ENCODE measurements at regions of chr12 and their contacts with region 1.

Region 1: GRCh38 chr12:96906849-96907670 is at the start of gene NEDD1:
- DNase-seq: peak; percentile 65 to 90 (median 81)
- ATAC-seq: peak; percentile 72
- H3K4me3 ChIP-seq: peak within 1 kb of the TSS; percentile 99
- H3K4me3 Mint-ChIP-seq: peak within 1 kb of the TSS; percentile 91
- H3K27ac ChIP-seq: peak within 1 kb of the TSS; percentile 99 to 100
- H3K27ac Mint-ChIP-seq: peak within 1 kb of the TSS; percentile 99
- H3K4me1 ChIP-seq: peaks cover 21% of the 10 kb centered on the region
- H3K4me1 Mint-ChIP-seq: peaks cover 46% of the 10 kb centered on the region
- H3K27me3 ChIP-seq: no peaks in the 10 kb centered on the region
- H3K27me3 Mint-ChIP-seq: no peaks in the 10 kb centered on the region
- CTCF ChIP-seq: no peak
- total RNA-seq, gene NEDD1: 26.7 to 27.8 TPM

Region 2: DNA sequence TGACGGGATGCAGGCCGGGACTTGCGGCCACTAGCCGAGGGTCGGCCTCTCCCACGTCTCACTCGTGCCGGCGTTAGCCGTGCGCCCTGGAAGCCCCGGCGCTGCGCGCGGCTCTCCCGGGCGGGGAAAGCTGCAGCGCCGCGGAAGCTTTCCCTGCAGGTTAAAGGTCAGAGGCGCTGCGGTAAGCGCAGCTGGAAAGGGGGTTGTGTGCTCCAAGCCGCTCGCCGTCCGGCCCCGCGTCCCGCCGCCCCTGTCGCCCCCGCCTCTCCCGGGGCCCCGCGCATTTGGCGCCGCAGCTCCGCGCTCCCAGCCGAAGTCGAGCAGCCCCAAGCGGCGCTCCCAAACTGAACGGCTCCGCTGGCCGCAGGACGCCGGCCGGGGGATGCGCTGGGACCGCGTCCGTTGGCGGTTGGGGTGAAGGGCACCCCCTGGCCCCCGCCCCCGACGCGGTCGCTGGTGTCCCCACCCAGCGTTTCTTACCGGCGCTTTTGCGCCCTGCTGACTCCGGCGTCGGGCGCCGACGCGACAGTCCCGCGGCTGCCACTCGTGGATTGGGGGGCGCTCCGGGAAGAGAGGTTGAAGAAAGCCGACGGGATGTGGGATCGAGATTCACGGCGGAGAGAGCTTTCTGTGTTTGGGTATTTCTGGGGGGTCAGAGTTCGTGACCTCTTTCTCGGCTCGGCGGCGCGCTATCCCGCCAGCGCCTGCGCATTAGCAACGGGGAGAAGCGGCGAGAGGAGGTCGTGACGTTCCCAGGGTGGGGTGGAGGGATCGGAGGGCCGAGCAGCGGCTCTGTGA is 1834.0 kb before region 1 on chr12 and contains the start of gene NR2C1:
- CTCF ChIA-PET with region 1: no interaction called
- POLR2A ChIA-PET with region 1: no interaction called
- intact Hi-C with region 1: loop called (anchors 5 to 10 kb)
- DNase-seq: peak; percentile 83 to 97 (median 91)
- ATAC-seq: peak; percentile 98
- H3K4me3 ChIP-seq: peak within 1 kb of the TSS; percentile 86 to 96
- H3K4me3 Mint-ChIP-seq: peak within 1 kb of the TSS; percentile 97
- H3K27ac ChIP-seq: peak within 1 kb of the TSS; percentile 71 to 74
- H3K27ac Mint-ChIP-seq: peak within 1 kb of the TSS; percentile 95
- H3K4me1 ChIP-seq: peaks cover 5% of the 10 kb centered on the region
- H3K4me1 Mint-ChIP-seq: peaks cover 26% of the 10 kb centered on the region
- H3K27me3 ChIP-seq: no peaks in the 10 kb centered on the region
- H3K27me3 Mint-ChIP-seq: no peaks in the 10 kb centered on the region
- CTCF ChIP-seq: no peak
- total RNA-seq, gene NR2C1: 40.7 to 49.2 TPM

Region 3: DNA sequence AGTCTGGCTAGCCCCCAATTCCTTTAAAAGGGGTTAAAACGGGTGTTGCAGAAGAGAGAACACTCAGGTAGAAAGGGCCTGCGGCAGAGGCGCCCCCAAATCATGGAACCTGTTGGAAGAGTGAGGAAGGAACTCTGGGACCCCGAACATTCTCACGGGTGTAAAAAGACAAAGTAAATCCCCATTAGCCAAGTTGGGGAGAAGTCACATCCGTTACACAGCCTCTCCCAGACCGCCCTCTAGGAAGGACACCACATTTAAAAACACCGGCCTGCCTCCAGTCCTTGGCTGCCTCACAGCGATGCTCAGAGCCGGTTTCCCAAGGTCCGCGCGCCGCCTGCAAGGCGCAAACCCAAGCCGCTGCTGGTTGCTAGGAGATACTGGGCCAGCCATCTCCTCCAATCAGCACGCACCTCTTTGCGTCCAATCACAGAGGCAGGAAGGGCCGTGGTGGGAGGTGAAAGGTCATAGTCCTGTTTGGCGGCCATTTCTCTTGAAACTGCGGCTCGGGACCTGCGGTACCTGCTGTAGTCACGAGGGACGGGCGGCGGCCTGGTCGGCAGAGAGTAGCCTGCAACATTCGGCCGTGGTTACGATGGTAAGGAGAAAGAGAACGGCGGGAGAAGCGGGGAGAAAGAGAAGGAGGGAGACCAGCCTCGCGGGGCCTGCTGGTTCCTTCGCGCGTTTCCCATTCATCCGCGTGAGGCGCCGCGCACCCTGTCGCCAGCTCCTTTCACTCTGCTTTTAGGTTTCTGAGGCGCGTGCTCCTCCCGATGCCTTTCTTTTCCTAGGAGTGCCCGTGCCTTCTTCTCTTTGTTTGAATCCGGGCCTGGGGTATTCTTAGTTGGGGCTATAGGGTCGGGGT is 1048.3 kb before region 1 on chr12 and contains the start of gene SNRPF:
- CTCF ChIA-PET with region 1: no interaction called
- POLR2A ChIA-PET with region 1: no interaction called
- intact Hi-C with region 1: loop called (anchors 1 to 10 kb)
- DNase-seq: peak; percentile 88 to 97 (median 92)
- ATAC-seq: peak; percentile 94
- H3K4me3 ChIP-seq: peak within 1 kb of the TSS; percentile 83 to 86
- H3K4me3 Mint-ChIP-seq: no peak within 1 kb of the TSS
- H3K27ac ChIP-seq: peak within 1 kb of the TSS; percentile 79 to 92
- H3K27ac Mint-ChIP-seq: no peak within 1 kb of the TSS
- H3K4me1 ChIP-seq: peaks cover 22% of the 10 kb centered on the region
- H3K4me1 Mint-ChIP-seq: peaks cover 21% of the 10 kb centered on the region
- H3K27me3 ChIP-seq: peaks cover 0 to 2% of the 10 kb centered on the region in 2 experiments
- H3K27me3 Mint-ChIP-seq: peaks cover 3% of the 10 kb centered on the region
- CTCF ChIP-seq: no peak
- total RNA-seq, gene SNRPF: 42.9 to 49.2 TPM

Region 4: GRCh38 chr12:96035278-96036236 is 871.5 kb before region 1 on chr12 and contains the start of gene LTA4H:
- CTCF ChIA-PET with region 1: no interaction called
- POLR2A ChIA-PET with region 1: no interaction called
- intact Hi-C with region 1: loop called (anchors 2 to 5 kb)
- DNase-seq: peak; percentile 90 to 99 (median 97)
- ATAC-seq: peak; percentile 92
- H3K4me3 ChIP-seq: peak within 1 kb of the TSS; percentile 65 to 92
- H3K4me3 Mint-ChIP-seq: no peak within 1 kb of the TSS
- H3K27ac ChIP-seq: peak within 1 kb of the TSS; percentile 68 to 78
- H3K27ac Mint-ChIP-seq: no peak within 1 kb of the TSS
- H3K4me1 ChIP-seq: peaks cover 14% of the 10 kb centered on the region
- H3K4me1 Mint-ChIP-seq: peaks cover 12% of the 10 kb centered on the region
- H3K27me3 ChIP-seq: no peaks in the 10 kb centered on the region
- H3K27me3 Mint-ChIP-seq: no peaks in the 10 kb centered on the region
- CTCF ChIP-seq: no peak
- total RNA-seq, gene LTA4H: 38.4 to 42.9 TPM

Region 5: DNA sequence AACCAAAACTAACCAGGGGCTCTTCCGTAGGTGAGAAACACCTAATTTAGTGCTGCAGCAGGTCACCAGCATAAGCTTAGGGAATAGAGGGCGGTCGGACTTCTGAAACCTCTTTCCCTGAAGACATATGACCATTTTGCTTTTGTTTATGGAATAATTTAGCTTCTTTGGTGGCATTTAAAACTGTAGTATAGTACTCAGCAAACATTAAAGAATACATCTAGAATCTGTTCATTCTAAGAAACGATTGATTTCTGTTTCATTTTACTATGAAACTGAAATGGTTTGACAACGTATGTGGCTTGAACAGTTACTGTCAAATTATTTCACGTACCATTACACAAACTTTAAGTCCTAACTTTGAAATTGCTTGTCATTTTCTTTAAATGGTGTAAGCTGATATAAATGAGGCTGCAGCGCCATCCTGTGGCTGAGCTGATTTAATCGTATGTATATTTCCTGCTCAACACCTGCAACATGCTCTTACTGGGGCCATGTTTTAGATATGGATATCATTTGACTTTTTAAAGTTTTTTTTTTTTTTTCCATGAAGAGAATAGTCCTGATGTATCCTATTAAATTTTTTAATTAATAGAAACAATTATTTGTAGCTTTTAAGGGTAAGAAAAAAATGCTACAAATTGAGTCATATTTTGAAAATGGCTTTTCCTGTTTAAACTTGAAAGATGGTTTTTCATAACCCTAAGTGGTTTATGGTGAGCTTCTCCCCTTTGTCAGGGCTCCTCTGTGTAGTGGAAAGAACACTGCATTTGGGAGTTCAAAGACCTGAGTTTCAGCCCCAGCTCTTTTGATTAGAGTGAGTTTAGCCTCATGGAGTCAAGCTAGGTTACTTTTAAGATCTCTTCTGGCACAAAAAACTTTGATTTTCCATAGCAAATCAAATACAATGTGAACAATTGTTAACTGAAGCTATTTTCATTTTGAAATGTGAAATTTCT is 390.3 kb before region 1 on chr12:
- CTCF ChIA-PET with region 1: no interaction called
- POLR2A ChIA-PET with region 1: no interaction called
- intact Hi-C with region 1: loop called in 1 of 2 experiments (anchors 10 kb)
- DNase-seq: peak; percentile 73 to 91 (median 88)
- ATAC-seq: peak; percentile 89
- H3K4me3 ChIP-seq: no peak overlapping the region
- H3K4me3 Mint-ChIP-seq: peak overlapping the region; percentile 50
- H3K27ac ChIP-seq: no peak overlapping the region
- H3K27ac Mint-ChIP-seq: no peak overlapping the region
- H3K4me1 ChIP-seq: peaks cover 11% of the 10 kb centered on the region
- H3K4me1 Mint-ChIP-seq: peaks cover 11% of the 10 kb centered on the region
- H3K27me3 ChIP-seq: no peaks in the 10 kb centered on the region
- H3K27me3 Mint-ChIP-seq: no peaks in the 10 kb centered on the region
- CTCF ChIP-seq: peak; percentile 91

Region 6: DNA sequence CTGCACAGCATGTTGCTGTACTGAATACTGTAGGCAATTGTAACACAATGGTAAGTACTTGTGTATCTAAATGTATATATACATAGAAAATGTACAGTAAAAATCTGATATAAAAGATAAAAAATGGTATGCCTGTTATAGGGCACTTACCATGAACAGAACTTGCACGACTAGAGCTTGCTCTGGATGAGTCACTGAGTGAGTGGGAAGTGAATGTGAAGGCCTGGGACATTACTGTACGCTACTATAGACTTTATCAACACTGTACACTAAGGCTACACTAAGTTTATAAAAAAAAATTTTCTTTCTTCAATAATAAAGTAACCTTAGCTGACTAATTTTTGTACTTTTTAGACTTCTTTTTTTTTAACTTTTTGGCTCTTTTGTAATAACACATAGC is 24.2 kb before region 1 on chr12:
- CTCF ChIA-PET with region 1: no interaction called
- POLR2A ChIA-PET with region 1: no interaction called
- intact Hi-C with region 1: no loop called
- DNase-seq: no peak
- ATAC-seq: no peak
- H3K4me3 ChIP-seq: no peak overlapping the region
- H3K4me3 Mint-ChIP-seq: no peak overlapping the region
- H3K27ac ChIP-seq: no peak overlapping the region
- H3K27ac Mint-ChIP-seq: no peak overlapping the region
- H3K4me1 ChIP-seq: no peaks in the 10 kb centered on the region
- H3K4me1 Mint-ChIP-seq: no peaks in the 10 kb centered on the region
- H3K27me3 ChIP-seq: peaks cover 0 to 4% of the 10 kb centered on the region in 2 experiments
- H3K27me3 Mint-ChIP-seq: peaks cover 5% of the 10 kb centered on the region
- CTCF ChIP-seq: no peak

Region 7: GRCh38 chr12:98503592-98504367 is 1596.7 kb after region 1 on chr12:
- CTCF ChIA-PET with region 1: no interaction called
- POLR2A ChIA-PET with region 1: no interaction called
- intact Hi-C with region 1: loop called (anchors 5 to 10 kb)
- DNase-seq: peak; percentile 89 to 97 (median 94)
- ATAC-seq: peak; percentile 89
- H3K4me3 ChIP-seq: peak overlapping the region; percentile 89 to 96
- H3K4me3 Mint-ChIP-seq: peak overlapping the region; percentile 99
- H3K27ac ChIP-seq: peak overlapping the region; percentile 91 to 99
- H3K27ac Mint-ChIP-seq: peak overlapping the region; percentile 99
- H3K4me1 ChIP-seq: peaks cover 3% of the 10 kb centered on the region
- H3K4me1 Mint-ChIP-seq: peaks cover 20% of the 10 kb centered on the region
- H3K27me3 ChIP-seq: no peaks in the 10 kb centered on the region
- H3K27me3 Mint-ChIP-seq: no peaks in the 10 kb centered on the region
- CTCF ChIP-seq: no peak

Region 8: GRCh38 chr12:98644711-98645402 is 1737.8 kb after region 1 on chr12 and contains the starts of genes APAF1 and IKBIP:
- CTCF ChIA-PET with region 1: no interaction called
- POLR2A ChIA-PET with region 1: no interaction called
- intact Hi-C with region 1: loop called in 1 of 2 experiments (anchors 10 kb)
- DNase-seq: peak; percentile 94 to 99 (median 97)
- ATAC-seq: peak; percentile 89
- H3K4me3 ChIP-seq: peak within 1 kb of the TSS; percentile 93 to 99
- H3K4me3 Mint-ChIP-seq: peak within 1 kb of the TSS; percentile 99
- H3K27ac ChIP-seq: peak within 1 kb of the TSS; percentile 60 to 90
- H3K27ac Mint-ChIP-seq: peak within 1 kb of the TSS; percentile 94
- H3K4me1 ChIP-seq: peaks cover 14% of the 10 kb centered on the region
- H3K4me1 Mint-ChIP-seq: peaks cover 44% of the 10 kb centered on the region
- H3K27me3 ChIP-seq: no peaks in the 10 kb centered on the region
- H3K27me3 Mint-ChIP-seq: no peaks in the 10 kb centered on the region
- CTCF ChIP-seq: no peak
- total RNA-seq, gene APAF1: 10.5 to 11.9 TPM
- total RNA-seq, gene IKBIP: 1.4 to 1.9 TPM

Measured in CD8-positive, alpha-beta T cell (primary cell).